K562 (cell line): ENCODE measurements at regions of chr5 and their contacts with region 1.

Region 1: DNA sequence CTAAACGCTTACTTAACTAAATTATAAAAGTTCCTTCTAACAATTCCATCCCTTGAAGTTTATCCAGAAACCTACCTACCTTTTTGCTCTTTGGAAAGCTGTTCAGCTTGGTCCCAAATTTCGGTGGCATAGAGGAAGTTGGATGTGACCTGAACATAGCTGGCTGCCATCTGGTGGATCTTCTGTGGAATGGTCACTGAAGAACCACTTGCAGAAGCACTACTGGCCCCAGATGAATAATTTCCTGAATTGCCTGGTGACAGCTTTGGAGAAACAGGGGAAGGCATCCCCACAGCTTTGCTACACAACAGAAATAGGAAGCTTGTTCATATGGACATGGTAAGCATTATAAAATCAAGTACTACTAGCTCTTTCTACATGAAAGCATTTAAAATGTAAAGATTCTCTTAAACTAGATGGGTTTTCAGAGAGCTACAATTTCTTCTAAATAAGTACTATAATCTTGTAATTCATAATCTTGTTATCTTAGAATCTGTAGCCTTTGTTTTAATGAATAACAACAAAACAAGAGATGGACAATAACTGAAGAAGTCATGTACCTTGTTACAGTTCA is 9.9 kb downstream of the LEAP2 start:
- DNase-seq: peak; percentile 45 to 79 (median 56)
- ATAC-seq: peak; percentile 99
- H3K4me3 ChIP-seq: no peak overlapping the region
- H3K27ac ChIP-seq: no peak overlapping the region
- H3K4me1 ChIP-seq: no peaks in the 10 kb centered on the region
- H3K27me3 ChIP-seq: no peaks in the 10 kb centered on the region
- CTCF ChIP-seq: peak; percentile 74 to 83 (median 77)
- EP300 ChIP-seq: no peak
- POLR2A ChIP-seq: no peak
- RAD21 ChIP-seq: peak; percentile 83 to 88

Region 2: GRCh38 chr5:132653716-132654115 is 229.6 kb before region 1 on chr5:
- CTCF ChIA-PET with region 1: no interaction called
- POLR2A ChIA-PET with region 1: no interaction called
- in situ Hi-C with region 1: no loop called
- intact Hi-C with region 1: no loop called
- DNase-seq: peak in 1 of 4 experiments; percentile 36
- ATAC-seq: peak; percentile 53; the same call in 2 of the 3 replicates
- H3K4me3 ChIP-seq: no peak overlapping the region
- H3K27ac ChIP-seq: no peak overlapping the region
- H3K4me1 ChIP-seq: peaks cover 16 to 18% of the 10 kb centered on the region in 2 experiments; a peak in 4 of 5 replicates
- H3K27me3 ChIP-seq: no peaks in the 10 kb centered on the region
- CTCF ChIP-seq: 0 out of 6 replicates have a peak, but pooled peaks of 1 of the 3 experiments have one; percentile 17
- EP300 ChIP-seq: no peak
- POLR2A ChIP-seq: no peak
- RAD21 ChIP-seq: peak in 1 of 2 experiments; percentile 31; a peak in 1 of 4 replicates

Region 3: DNA sequence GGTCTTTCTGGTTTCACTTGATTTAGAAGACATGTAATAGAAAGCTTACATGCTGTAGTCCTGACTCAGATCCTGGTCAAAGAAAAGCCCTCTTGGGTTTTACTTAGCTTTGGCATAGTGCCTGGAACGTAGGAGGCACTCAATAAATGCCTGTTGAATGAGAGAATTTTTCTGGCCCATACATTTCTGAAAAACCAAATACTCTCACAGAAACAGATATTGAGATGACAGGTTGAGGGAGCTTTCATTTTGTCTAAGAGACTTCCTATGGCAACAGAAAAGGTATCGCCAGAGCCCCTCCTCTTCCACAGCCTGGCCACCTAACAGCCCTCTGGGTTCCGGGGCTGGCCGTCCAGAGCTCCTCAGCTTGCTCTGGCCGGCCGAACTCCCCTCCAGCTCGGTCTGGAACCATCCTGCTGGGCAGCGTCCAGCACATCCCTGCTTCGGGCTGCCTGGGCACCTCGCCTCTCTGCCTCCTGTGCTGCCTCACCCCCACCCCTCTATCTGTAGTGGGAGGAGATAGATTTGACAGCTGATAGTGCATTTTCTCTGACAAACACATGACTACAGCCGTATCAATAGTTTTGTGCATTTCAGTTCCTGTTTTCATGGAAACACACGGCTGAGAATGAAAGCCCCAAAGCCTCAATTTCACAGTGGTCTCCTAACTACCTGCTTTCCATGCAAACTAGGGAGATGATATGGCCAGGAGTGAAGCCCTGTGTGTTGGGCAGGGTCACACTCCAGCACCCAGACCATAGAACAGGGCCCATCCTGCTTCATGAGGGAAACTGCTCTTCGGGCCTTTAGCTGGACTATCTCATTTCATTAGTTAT is 208.5 kb before region 1 on chr5:
- CTCF ChIA-PET with region 1: no interaction called
- POLR2A ChIA-PET with region 1: no interaction called
- in situ Hi-C with region 1: no loop called
- intact Hi-C with region 1: loop called (anchors 10 kb)
- DNase-seq: no peak
- ATAC-seq: peak; percentile 48
- H3K4me3 ChIP-seq: no peak overlapping the region
- H3K27ac ChIP-seq: no peak overlapping the region
- H3K4me1 ChIP-seq: peaks cover 20 to 38% of the 10 kb centered on the region in 2 experiments; a peak in 4 of 5 replicates
- H3K27me3 ChIP-seq: no peaks in the 10 kb centered on the region
- CTCF ChIP-seq: no peak
- EP300 ChIP-seq: no peak
- POLR2A ChIP-seq: no peak
- RAD21 ChIP-seq: no peak

Region 4: DNA sequence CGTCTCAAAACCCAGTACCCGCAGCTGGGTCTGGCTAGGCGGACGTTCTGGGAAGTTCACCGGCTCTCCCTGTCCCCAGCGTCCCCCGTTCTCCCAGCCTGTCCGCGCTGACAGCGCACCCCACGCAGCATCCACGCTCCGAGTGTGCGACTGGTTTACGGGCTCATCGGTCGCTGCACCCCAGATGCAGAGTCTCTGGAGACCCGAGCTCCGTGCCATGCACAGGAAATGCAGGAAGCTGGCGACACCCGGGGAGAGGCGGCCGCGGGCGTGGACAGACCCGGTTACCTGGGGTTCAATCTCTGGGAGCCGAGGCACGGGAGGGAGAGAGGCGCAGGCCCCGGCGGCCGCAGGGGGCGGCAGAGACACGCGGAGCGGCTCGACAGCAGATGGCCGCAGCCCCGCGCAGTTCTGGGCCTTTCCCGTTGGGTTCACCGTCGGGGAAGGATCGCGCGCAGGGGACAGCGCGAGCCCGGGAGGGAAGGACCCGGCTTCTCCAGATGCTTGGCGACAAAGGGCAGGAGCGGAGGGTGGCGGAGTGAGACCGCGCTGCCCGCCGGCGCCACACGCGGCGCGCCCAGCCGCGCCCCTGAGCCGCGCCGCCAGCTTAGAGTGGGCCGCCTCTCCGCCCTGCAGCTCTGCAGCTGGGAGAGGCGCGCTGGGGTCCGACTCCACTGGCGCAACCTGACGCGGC is 53.5 kb before region 1 on chr5:
- CTCF ChIA-PET with region 1: interaction called, 13 read pairs
- POLR2A ChIA-PET with region 1: no interaction called
- in situ Hi-C with region 1: no loop called
- intact Hi-C with region 1: loop called (anchors 1 kb)
- DNase-seq: peak; percentile 79 to 89 (median 85)
- ATAC-seq: peak; percentile 89
- H3K4me3 ChIP-seq: peak overlapping the region; percentile 74
- H3K27ac ChIP-seq: peak overlapping the region; percentile 92
- H3K4me1 ChIP-seq: peaks cover 18 to 29% of the 10 kb centered on the region in 2 experiments; a peak in 4 of 5 replicates
- H3K27me3 ChIP-seq: no peaks in the 10 kb centered on the region
- CTCF ChIP-seq: peak; percentile 85 to 93 (median 93)
- EP300 ChIP-seq: no peak
- POLR2A ChIP-seq: no peak
- RAD21 ChIP-seq: peak; percentile 86 to 88